MCF 10A (cell line): ENCODE measurements at regions of chr15 and their contacts with region 1.

Region 1: DNA sequence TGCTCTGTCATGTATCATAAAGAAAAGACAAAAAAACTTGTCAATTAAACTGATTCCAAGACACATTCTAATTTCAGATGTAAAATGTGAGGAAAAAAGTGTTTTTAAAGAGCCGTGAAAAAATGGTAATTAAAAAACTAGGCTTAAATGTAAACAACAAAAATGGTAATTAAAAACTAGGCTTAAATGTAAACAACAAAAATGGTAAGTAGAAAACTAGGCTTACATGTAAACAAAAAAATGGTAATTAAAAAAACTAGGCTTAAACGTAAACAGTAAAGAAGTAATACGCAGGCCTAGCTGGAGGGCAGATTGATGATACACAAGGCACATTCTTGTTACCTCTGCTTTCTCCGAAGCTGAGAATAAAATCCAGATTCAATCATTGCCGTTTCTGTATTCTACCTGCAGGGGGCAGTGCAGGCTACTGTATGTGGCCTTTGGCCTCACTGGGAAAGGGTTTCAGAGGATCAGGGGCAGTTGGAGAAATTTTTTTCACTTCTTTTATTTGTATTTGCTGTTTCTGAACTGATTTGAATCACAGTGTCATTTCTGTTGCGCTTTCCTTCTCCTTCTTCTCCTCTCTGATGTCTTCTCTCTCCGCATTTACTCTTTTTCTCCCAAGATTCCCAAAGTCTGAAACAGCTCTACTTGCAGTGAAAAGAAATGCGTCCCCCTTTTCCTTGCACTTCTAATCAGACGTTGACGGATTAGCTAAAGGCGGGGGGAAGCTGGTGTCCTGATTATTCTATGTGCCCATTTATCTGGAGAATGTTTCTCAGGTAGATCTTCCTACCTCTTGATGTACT is 67.2 kb upstream of the MCTP2 start:
- DNase-seq: peak; percentile 86
- H3K4me3 Mint-ChIP-seq: no peak overlapping the region
- H3K27ac Mint-ChIP-seq: no peak overlapping the region
- H3K4me1 Mint-ChIP-seq: no peaks in the 10 kb centered on the region
- H3K27me3 Mint-ChIP-seq: no peaks in the 10 kb centered on the region
- CTCF ChIP-seq: peak; percentile 86

Region 2: DNA sequence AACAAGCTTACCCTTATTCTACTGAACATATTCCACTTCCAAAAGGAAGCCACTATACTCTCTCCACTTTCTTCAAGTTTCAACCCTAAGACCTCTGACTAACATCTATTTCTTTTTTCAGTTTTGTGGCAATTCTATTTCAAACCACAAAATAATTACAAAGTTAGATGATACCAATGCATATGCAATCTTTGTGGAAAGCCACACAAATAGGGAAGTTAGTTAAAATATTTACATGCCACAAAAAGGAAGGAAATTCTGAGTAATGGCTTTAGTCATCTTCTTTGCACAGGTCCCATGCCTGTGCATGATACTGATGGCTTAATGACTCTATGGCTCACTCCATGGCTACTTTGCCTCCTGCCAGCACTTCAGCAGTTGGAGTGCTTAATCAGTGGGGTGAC is 10.2 kb after region 1 on chr15:
- CTCF ChIA-PET with region 1: interaction called, 22 read pairs
- POLR2A ChIA-PET with region 1: no interaction called
- intact Hi-C with region 1: no loop called
- DNase-seq: peak; percentile 49
- H3K4me3 Mint-ChIP-seq: no peak overlapping the region
- H3K27ac Mint-ChIP-seq: no peak overlapping the region
- H3K4me1 Mint-ChIP-seq: peaks cover 8% of the 10 kb centered on the region
- H3K27me3 Mint-ChIP-seq: no peaks in the 10 kb centered on the region
- CTCF ChIP-seq: no peak

Region 3: DNA sequence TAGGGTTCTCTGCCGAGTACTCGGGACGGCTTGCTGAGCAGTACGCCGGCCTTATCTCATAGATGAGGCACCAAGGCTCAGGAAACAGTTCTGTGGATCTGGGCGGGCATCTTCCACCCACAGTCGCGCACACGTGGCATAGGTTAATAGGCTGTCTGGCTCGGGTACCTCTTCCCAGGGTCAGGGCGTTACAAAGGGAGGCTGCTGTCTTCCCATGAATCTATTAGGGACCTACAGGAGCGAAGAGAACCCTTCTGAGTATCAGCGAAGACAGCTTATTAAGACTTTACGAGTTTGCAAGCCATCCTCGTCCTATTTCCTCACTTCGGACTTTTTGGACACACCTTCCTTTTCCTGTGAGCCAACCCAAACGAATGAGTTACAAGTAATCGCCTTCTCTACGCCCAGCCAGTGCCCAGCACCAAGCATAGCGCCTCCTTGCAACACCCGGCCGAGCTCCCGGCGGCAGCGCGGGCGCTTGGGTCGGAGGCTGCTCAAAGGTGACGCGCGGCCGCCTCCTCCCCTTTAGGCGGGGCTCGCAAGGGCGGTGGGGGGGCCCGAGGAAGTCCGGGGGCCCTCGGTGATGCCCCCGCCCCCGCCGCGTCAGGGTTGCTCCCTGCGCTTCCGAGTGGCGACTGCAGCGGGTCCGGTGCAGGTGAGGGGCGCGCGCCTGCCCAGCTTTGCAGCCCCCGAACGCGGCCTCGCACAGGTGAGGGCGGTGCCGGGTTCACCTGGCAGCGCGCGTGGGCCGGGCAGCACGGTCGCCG is 66.9 kb after region 1 on chr15 and contains the start of gene MCTP2:
- CTCF ChIA-PET with region 1: interaction called, 16 read pairs
- POLR2A ChIA-PET with region 1: interaction called, 15 read pairs
- intact Hi-C with region 1: loop called (anchors 2 kb)
- DNase-seq: peak; percentile 95
- H3K4me3 Mint-ChIP-seq: peak within 1 kb of the TSS; percentile 75
- H3K27ac Mint-ChIP-seq: peak within 1 kb of the TSS; percentile 85
- H3K4me1 Mint-ChIP-seq: peaks cover 33% of the 10 kb centered on the region
- H3K27me3 Mint-ChIP-seq: no peaks in the 10 kb centered on the region
- CTCF ChIP-seq: no peak
- total RNA-seq, gene MCTP2: 20.5 and 25.7 TPM in 2 replicates

Region 4: DNA sequence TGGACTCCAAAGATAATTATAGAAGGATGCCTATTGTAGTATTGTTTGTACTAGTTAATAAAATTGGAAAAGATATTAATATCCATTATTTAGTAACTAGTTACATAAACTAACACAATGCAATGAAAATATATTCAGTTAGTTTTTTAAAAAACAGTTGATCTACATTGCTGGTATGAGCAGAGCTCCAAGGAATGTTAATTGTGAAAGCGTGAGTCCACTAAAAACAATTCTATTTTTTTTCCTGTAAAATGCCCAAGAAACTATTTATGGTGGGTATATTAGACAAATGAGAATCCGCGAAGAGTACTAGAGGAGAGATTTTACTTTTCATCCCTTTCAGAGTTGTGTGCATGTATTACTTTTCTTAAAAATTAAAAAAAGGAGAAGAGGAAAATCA is 171.4 kb after region 1 on chr15:
- CTCF ChIA-PET with region 1: interaction called, 43 read pairs
- POLR2A ChIA-PET with region 1: interaction called, 3 read pairs
- intact Hi-C with region 1: no loop called
- DNase-seq: no peak
- H3K4me3 Mint-ChIP-seq: no peak overlapping the region
- H3K27ac Mint-ChIP-seq: no peak overlapping the region
- H3K4me1 Mint-ChIP-seq: peaks cover under 1% of the 10 kb centered on the region
- H3K27me3 Mint-ChIP-seq: no peaks in the 10 kb centered on the region
- CTCF ChIP-seq: no peak

Region 5: GRCh38 chr15:94346282-94346681 is 182.1 kb after region 1 on chr15:
- CTCF ChIA-PET with region 1: interaction called, 19 read pairs
- POLR2A ChIA-PET with region 1: no interaction called
- intact Hi-C with region 1: no loop called
- DNase-seq: no peak
- H3K4me3 Mint-ChIP-seq: no peak overlapping the region
- H3K27ac Mint-ChIP-seq: no peak overlapping the region
- H3K4me1 Mint-ChIP-seq: peaks cover 6% of the 10 kb centered on the region
- H3K27me3 Mint-ChIP-seq: no peaks in the 10 kb centered on the region
- CTCF ChIP-seq: no peak

Region 6: DNA sequence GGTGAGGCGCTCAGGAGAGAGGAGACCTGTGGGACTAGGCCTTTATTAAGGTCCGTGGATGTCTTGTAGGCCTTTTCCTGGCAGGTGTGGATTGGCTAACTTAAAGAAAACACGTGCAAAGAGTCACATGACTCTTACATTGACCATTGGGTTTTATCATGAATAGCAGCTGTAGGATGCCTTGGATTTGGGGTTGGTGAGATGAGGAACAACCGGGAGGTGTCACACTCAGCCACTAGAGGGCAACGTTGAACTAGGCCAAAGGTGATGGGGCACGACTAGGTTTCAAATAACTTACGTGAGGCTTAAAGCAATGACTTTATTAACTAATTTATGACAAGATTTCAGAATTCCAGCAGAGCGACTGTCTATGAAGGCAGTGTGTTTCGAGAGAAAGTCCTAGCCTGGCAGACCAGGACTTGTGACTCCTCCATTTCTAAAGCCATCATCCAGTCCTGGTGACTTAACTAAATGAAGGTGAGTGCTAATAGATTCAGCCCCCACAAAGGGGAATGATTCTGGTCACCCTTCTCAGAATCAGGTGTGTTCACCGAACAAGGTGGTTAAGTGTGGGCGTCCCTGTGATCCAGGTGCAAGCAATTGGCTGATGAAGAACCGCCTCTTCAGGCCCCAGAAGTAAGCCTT is 412.8 kb after region 1 on chr15:
- CTCF ChIA-PET with region 1: interaction called, 3 read pairs
- POLR2A ChIA-PET with region 1: no interaction called
- intact Hi-C with region 1: loop called (anchors 1 kb)
- DNase-seq: peak; percentile 72
- H3K4me3 Mint-ChIP-seq: no peak overlapping the region
- H3K27ac Mint-ChIP-seq: no peak overlapping the region
- H3K4me1 Mint-ChIP-seq: peaks cover 5% of the 10 kb centered on the region
- H3K27me3 Mint-ChIP-seq: no peaks in the 10 kb centered on the region
- CTCF ChIP-seq: peak; percentile 58